ENCODE measurements at regions of chr20 and their contacts with region 1.

Region 1: GRCh38 chr20:3051385-3052019 is 5.7 kb downstream of the MRPS26 start:
- DNase-seq: no peak
- H3K4me3 Mint-ChIP-seq: no peak overlapping the region
- H3K27ac Mint-ChIP-seq: peak overlapping the region; percentile 23
- H3K4me1 Mint-ChIP-seq: peaks cover 29% of the 10 kb centered on the region
- H3K27me3 Mint-ChIP-seq: no peaks in the 10 kb centered on the region

Region 2: GRCh38 chr20:3077618-3078134 is 26.2 kb after region 1 on chr20:
- CTCF ChIA-PET with region 1: interaction called, 10 read pairs
- POLR2A ChIA-PET with region 1: interaction called, 3 read pairs
- intact Hi-C with region 1: loop called (anchors 1 kb)
- DNase-seq: peak; percentile 29
- H3K4me3 Mint-ChIP-seq: no peak overlapping the region
- H3K27ac Mint-ChIP-seq: no peak overlapping the region
- H3K4me1 Mint-ChIP-seq: peaks cover 27% of the 10 kb centered on the region
- H3K27me3 Mint-ChIP-seq: peaks cover 28% of the 10 kb centered on the region

Region 3: DNA sequence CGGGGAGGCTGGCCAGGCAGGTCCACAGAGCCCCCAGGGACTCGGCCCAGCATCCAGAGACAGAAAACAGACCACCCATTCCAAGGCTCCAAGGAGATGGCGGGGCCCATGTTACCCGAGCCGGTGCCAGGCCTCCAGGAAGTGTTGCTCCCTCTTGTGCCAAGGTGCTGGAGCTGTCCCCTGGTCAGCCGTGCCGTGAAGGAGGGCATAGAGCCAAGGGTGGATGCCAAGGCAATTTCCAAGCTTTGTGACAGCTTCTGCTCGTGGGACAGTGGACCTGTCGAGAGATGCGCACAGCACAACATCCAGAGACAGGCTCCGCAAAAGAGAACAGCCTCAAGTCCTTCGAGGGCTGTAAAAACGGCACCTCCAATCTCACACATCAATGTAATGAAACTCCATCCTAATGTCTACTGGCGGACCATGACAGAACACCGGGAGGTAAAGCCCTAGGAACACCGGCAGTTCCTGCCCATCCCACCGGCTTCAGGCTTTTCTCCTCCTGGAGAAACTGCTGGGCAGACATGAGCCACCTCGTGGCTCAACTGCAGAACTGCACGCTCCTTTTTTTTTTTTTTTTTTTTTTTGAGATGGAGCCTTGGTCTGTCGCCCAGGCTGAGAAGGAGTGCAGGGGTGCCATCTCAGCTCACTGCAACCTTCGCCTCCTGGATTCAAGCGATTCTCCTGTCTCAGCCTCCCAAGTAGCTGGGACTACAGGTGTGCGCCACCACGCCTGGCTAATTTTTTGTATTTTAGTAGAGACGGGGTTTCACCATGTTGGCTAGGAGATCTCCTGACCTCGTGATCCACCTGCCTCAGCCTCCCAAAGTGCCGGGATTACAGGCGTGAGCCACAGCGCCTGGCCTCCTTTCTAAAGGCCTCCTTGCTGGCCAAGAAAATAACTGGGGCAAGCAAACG is 63.9 kb after region 1 on chr20:
- CTCF ChIA-PET with region 1: interaction called, 46 read pairs
- POLR2A ChIA-PET with region 1: no interaction called
- intact Hi-C with region 1: loop called (anchors 2 kb)
- DNase-seq: peak; percentile 29
- H3K4me3 Mint-ChIP-seq: no peak overlapping the region
- H3K27ac Mint-ChIP-seq: no peak overlapping the region
- H3K4me1 Mint-ChIP-seq: peaks cover 7% of the 10 kb centered on the region
- H3K27me3 Mint-ChIP-seq: no peaks in the 10 kb centered on the region

Region 4: DNA sequence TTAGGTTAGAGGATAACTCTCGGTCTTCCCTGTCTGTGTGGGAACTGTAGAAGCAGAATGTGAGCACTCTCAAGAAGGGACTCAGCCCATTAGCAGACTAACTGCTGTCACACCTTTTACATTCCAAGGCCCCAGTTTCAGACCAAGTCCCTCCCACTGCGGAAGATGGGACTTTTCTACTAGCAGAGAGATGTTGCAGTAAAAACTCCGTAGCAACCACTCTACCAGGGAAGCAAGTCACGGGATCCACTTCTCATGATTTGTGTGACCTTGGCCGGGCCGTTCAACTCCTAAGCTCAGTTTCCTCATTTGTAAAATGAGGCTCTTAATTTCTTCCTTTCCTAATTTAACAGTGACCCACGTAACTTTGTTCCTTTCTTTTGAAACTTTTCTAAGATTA is 264.6 kb after region 1 on chr20:
- CTCF ChIA-PET with region 1: interaction called, 7 read pairs
- POLR2A ChIA-PET with region 1: no interaction called
- intact Hi-C with region 1: loop called (anchors 1 kb)
- DNase-seq: no peak
- H3K4me3 Mint-ChIP-seq: no peak overlapping the region
- H3K27ac Mint-ChIP-seq: no peak overlapping the region
- H3K4me1 Mint-ChIP-seq: no peaks in the 10 kb centered on the region
- H3K27me3 Mint-ChIP-seq: no peaks in the 10 kb centered on the region

Measured in activated CD4-positive, alpha-beta memory T cell treated with anti-CD3 and anti-CD28 coated beads for 36 hours (primary cell).